MCF 10A (cell line): ENCODE measurements at regions of chr15 and their contacts with region 1.

Region 1: GRCh38 chr15:48877630-48878595 is at the start of gene EID1:
- DNase-seq: peak; percentile 92
- H3K4me3 Mint-ChIP-seq: peak within 1 kb of the TSS; percentile 96
- H3K27ac Mint-ChIP-seq: peak within 1 kb of the TSS; percentile 94
- H3K4me1 Mint-ChIP-seq: peaks cover 11% of the 10 kb centered on the region
- H3K27me3 Mint-ChIP-seq: no peaks in the 10 kb centered on the region
- CTCF ChIP-seq: no peak
- total RNA-seq, gene EID1: 91.3 and 110 TPM in 2 replicates

Region 2: GRCh38 chr15:48861813-48862431 is 16.0 kb before region 1 on chr15:
- CTCF ChIA-PET with region 1: interaction called, 7 read pairs
- POLR2A ChIA-PET with region 1: interaction called, 33 read pairs
- intact Hi-C with region 1: no loop called
- DNase-seq: peak; percentile 72
- H3K4me3 Mint-ChIP-seq: no peak overlapping the region
- H3K27ac Mint-ChIP-seq: peak overlapping the region; percentile 61
- H3K4me1 Mint-ChIP-seq: peaks cover 29% of the 10 kb centered on the region
- H3K27me3 Mint-ChIP-seq: no peaks in the 10 kb centered on the region
- CTCF ChIP-seq: peak; percentile 73

Region 3: GRCh38 chr15:48940448-48940893 is 62.6 kb after region 1 on chr15:
- CTCF ChIA-PET with region 1: interaction called, 3 read pairs
- POLR2A ChIA-PET with region 1: interaction called, 16 read pairs
- intact Hi-C with region 1: no loop called
- DNase-seq: peak; percentile 65
- H3K4me3 Mint-ChIP-seq: no peak overlapping the region
- H3K27ac Mint-ChIP-seq: no peak overlapping the region
- H3K4me1 Mint-ChIP-seq: peaks cover 25% of the 10 kb centered on the region
- H3K27me3 Mint-ChIP-seq: no peaks in the 10 kb centered on the region
- CTCF ChIP-seq: no peak

Region 4: GRCh38 chr15:48975472-48976419 is 97.8 kb after region 1 on chr15:
- CTCF ChIA-PET with region 1: interaction called, 15 read pairs
- POLR2A ChIA-PET with region 1: interaction called, 6 read pairs
- intact Hi-C with region 1: no loop called
- DNase-seq: peak; percentile 74
- H3K4me3 Mint-ChIP-seq: peak overlapping the region; percentile 45
- H3K27ac Mint-ChIP-seq: no peak overlapping the region
- H3K4me1 Mint-ChIP-seq: peaks cover 10% of the 10 kb centered on the region
- H3K27me3 Mint-ChIP-seq: no peaks in the 10 kb centered on the region
- CTCF ChIP-seq: peak; percentile 91

Region 5: DNA sequence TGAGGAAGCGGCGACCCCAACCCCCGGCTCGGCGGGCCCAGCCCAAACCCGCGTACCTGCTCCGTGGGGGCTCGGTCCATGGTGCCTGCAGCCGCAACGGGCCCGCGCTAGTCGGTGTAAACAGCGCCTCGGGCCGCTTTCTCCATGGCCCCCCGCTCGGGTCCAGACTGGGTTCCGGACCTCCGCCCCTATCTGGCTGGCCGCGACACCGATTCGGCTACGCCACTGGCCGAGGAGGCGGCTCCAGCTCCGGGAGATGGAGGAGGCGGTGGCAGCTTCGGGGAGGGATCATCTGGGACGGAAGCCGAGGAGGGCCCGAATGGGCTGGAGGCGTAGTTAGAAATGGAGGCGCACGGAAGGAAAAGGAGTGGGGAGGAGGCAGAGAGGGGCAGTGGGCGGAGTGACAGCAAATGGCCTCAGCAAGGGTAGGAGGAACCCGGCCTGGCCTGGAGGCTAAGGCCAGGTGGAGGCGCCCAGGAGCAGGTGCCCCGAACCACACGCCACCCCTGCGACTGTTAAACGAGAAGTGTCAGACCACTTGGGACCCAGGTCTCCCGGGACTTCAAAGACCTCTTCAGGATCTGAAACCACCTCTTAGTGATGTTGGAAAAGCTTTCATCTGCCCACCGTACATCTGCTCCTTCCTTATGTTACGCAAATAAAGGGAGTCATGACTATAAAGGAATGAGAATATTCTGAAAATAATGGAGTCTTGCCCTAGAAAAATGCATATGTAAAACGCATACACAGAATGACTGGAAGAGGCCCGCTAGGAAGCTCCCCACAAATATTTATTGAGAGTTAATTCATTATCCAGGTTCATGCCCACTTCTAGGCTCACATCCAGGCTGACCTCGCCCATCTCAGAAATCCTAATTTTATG is 168.5 kb after region 1 on chr15 and contains the start of gene SECISBP2L:
- CTCF ChIA-PET with region 1: no interaction called
- POLR2A ChIA-PET with region 1: interaction called, 16 read pairs
- intact Hi-C with region 1: no loop called
- DNase-seq: peak; percentile 95
- H3K4me3 Mint-ChIP-seq: peak within 1 kb of the TSS; percentile 94
- H3K27ac Mint-ChIP-seq: peak within 1 kb of the TSS; percentile 94
- H3K4me1 Mint-ChIP-seq: peaks cover 9% of the 10 kb centered on the region
- H3K27me3 Mint-ChIP-seq: no peaks in the 10 kb centered on the region
- CTCF ChIP-seq: peak; percentile 11
- total RNA-seq, gene SECISBP2L: 19.6 and 32.3 TPM in 2 replicates